Activated T-helper 2 cell treated with anti-CD3 and anti-CD28 coated beads, Interferon-gamma antibody, Interleukin-2, Interleukin-4, amounts not matched to agents 10 μg/mL and 5 μg/mL and 100 μg/mL, durations not matched to agents 14 hours and 24 hours and 36 hours (primary cell): ENCODE measurements at regions of chr17 and their contacts with region 1.

Region 1: GRCh38 chr17:59707114-59707970 is at the starts of genes PTRH2 and VMP1:
- DNase-seq: peak; percentile 93
- H3K4me3 Mint-ChIP-seq: peak within 1 kb of the TSS; percentile 95
- H3K27ac Mint-ChIP-seq: peak within 1 kb of the TSS; percentile 85
- H3K4me1 Mint-ChIP-seq: peaks cover 43% of the 10 kb centered on the region
- H3K27me3 Mint-ChIP-seq: no peaks in the 10 kb centered on the region
- total RNA-seq, gene PTRH2: 48.3 and 50.3 TPM in 2 replicates
- total RNA-seq, gene VMP1: 479 and 499 TPM in 2 replicates

Region 2: GRCh38 chr17:59565171-59565969 is 142.0 kb before region 1 on chr17 and contains the start of gene DHX40:
- intact Hi-C with region 1: loop called (anchors 1 kb)
- DNase-seq: peak; percentile 91
- H3K4me3 Mint-ChIP-seq: peak within 1 kb of the TSS; percentile 99
- H3K27ac Mint-ChIP-seq: peak within 1 kb of the TSS; percentile 96
- H3K4me1 Mint-ChIP-seq: peaks cover 18% of the 10 kb centered on the region
- H3K27me3 Mint-ChIP-seq: no peaks in the 10 kb centered on the region
- total RNA-seq, gene DHX40: 16.7 and 18.2 TPM in 2 replicates

Region 3: DNA sequence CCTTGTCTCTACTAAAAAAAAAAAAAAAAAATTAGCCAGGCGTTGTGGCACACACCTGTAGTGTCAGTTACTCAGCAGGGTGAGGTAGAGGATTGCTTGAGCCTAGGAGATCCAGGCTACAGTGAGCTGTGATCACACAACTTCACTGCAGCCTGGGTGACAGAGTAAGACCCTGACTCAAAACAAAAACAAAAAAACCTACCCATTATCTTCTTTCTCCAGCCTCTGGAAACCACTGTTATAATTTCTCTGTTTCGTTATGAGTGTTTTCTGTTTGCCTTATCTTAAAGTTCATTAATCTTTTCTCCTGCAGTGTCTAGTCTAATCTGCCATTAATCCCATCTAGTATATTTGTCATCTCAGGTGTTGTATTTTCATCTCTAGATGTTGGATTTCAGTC is 106.2 kb before region 1 on chr17:
- intact Hi-C with region 1: no loop called
- DNase-seq: peak; percentile 23
- H3K4me3 Mint-ChIP-seq: no peak overlapping the region
- H3K27ac Mint-ChIP-seq: peak overlapping the region; percentile 43
- H3K4me1 Mint-ChIP-seq: peaks cover 19% of the 10 kb centered on the region
- H3K27me3 Mint-ChIP-seq: no peaks in the 10 kb centered on the region

Region 4: GRCh38 chr17:59846394-59847165 is 139.2 kb after region 1 on chr17:
- intact Hi-C with region 1: loop called (anchors 5 kb)
- DNase-seq: no peak
- H3K4me3 Mint-ChIP-seq: peak overlapping the region; percentile 35
- H3K27ac Mint-ChIP-seq: peak overlapping the region; percentile 69
- H3K4me1 Mint-ChIP-seq: peaks cover 48% of the 10 kb centered on the region
- H3K27me3 Mint-ChIP-seq: no peaks in the 10 kb centered on the region

Region 5: DNA sequence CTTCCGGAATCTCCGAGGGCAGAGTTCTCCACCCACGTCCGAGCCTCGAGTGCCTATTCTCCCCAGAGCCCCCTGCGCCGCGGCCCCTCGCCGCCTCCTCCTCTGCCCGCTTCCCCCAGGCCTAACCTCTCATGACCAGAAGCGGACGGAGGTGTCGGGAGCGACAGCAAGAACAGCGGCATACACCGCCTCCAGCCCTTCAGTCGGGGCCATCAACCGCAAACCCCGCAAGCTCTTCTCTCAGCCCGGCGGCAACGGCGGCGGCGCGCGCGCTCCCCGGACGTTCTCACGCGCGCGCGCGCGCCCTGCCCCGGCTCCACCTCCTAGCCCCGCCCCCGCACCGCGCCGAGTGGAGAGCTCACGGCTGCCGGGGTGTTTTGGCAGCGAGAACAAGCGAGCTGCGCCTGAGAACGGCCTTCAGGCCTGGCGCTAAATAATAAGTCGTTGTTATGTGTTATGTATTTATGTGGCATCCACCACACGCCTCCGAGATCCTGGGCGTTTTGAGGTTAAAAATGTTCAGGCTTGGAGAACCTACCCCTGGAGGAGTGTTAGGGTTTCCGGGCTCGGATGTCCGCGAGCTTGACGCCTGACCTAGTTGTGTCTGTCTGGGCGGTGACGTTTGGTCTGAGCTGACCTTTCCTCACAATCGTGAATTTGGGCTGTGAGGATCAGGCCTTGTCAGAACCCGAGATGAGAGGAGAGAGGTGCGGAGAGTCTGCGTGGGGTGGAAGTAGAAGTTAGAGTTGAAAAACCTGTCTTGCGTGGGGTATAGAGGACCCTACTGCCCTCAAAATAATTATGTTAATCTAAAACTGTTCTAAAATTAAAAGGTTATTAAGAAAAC is 257.4 kb after region 1 on chr17 and contains the start of gene RNFT1:
- intact Hi-C with region 1: loop called (anchors 1 kb)
- DNase-seq: peak; percentile 85
- H3K4me3 Mint-ChIP-seq: peak within 1 kb of the TSS; percentile 91
- H3K27ac Mint-ChIP-seq: peak within 1 kb of the TSS; percentile 96
- H3K4me1 Mint-ChIP-seq: peaks cover 19% of the 10 kb centered on the region
- H3K27me3 Mint-ChIP-seq: no peaks in the 10 kb centered on the region
- total RNA-seq, gene RNFT1: 32.7 TPM in 2 replicates